GM12878 (cell line): ENCODE measurements at regions of chr15 and their contacts with region 1.

Region 1: GRCh38 chr15:79380755-79381497 is 51.2 kb upstream of the MINAR1 start:
- DNase-seq: peak; percentile 15
- ATAC-seq: peak; percentile 99
- H3K4me3 ChIP-seq: no peak overlapping the region
- H3K27ac ChIP-seq: no peak overlapping the region
- H3K4me1 ChIP-seq: no peaks in the 10 kb centered on the region
- H3K27me3 ChIP-seq: no peaks in the 10 kb centered on the region
- CTCF ChIP-seq: peak; percentile 82 to 89 (median 87)
- EP300 ChIP-seq: no peak
- POLR2A ChIP-seq: no peak
- RAD21 ChIP-seq: peak; percentile 88

Region 2: GRCh38 chr15:79209690-79210089 is 171.2 kb before region 1 on chr15:
- CTCF ChIA-PET with region 1: no interaction called
- POLR2A ChIA-PET with region 1: no interaction called
- RAD21 ChIA-PET with region 1: no interaction called
- SMC1A ChIA-PET with region 1: no interaction called
- in situ Hi-C with region 1: no loop called
- intact Hi-C with region 1: no loop called
- DNase-seq: no peak
- ATAC-seq: no peak
- H3K4me3 ChIP-seq: no peak overlapping the region
- H3K27ac ChIP-seq: no peak overlapping the region
- H3K4me1 ChIP-seq: no peaks in the 10 kb centered on the region
- H3K27me3 ChIP-seq: peaks cover 6 to 7% of the 10 kb centered on the region in 2 experiments
- CTCF ChIP-seq: no peak; a peak in 1 of 6 replicates
- EP300 ChIP-seq: no peak
- POLR2A ChIP-seq: no peak
- RAD21 ChIP-seq: no peak

Region 3: GRCh38 chr15:79339564-79340314 is 41.2 kb before region 1 on chr15:
- CTCF ChIA-PET with region 1: interaction called, 27 read pairs
- POLR2A ChIA-PET with region 1: no interaction called
- RAD21 ChIA-PET with region 1: interaction called, 10 read pairs
- SMC1A ChIA-PET with region 1: interaction called, 18 read pairs
- in situ Hi-C with region 1: no loop called
- intact Hi-C with region 1: no loop called
- DNase-seq: no peak
- ATAC-seq: peak; percentile 71
- H3K4me3 ChIP-seq: no peak overlapping the region
- H3K27ac ChIP-seq: no peak overlapping the region
- H3K4me1 ChIP-seq: no peaks in the 10 kb centered on the region
- H3K27me3 ChIP-seq: no peaks in the 10 kb centered on the region
- CTCF ChIP-seq: peak; percentile 78 to 91 (median 83)
- EP300 ChIP-seq: no peak
- POLR2A ChIP-seq: no peak
- RAD21 ChIP-seq: peak; percentile 71

Region 4: DNA sequence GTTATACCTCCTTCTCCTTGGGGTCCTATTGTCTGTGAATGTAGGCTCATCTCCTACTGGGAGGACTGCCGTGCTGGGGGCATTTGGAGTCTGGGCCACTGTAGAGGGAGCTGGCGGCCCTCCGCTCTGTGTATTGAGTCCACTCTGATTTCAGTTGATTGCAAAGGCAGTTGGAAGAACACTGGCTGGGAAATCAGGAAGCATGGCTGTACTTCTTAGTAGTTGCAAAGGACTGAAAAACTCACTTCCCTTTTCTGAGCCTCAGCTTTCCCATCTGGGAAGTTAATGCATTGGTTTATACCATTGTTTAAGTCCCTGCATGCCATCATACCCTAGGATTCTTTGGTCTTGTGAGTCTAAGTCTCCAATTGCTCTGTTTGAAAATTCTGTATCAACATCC is 23.4 kb before region 1 on chr15:
- CTCF ChIA-PET with region 1: interaction called, 17 read pairs
- POLR2A ChIA-PET with region 1: no interaction called
- RAD21 ChIA-PET with region 1: no interaction called
- SMC1A ChIA-PET with region 1: no interaction called
- in situ Hi-C with region 1: no loop called
- intact Hi-C with region 1: no loop called
- DNase-seq: no peak
- ATAC-seq: no peak
- H3K4me3 ChIP-seq: no peak overlapping the region
- H3K27ac ChIP-seq: no peak overlapping the region
- H3K4me1 ChIP-seq: peaks cover 4% of the 10 kb centered on the region; the same call in 1 of the 2 replicates
- H3K27me3 ChIP-seq: no peaks in the 10 kb centered on the region
- CTCF ChIP-seq: no peak
- EP300 ChIP-seq: no peak
- POLR2A ChIP-seq: no peak
- RAD21 ChIP-seq: no peak

Region 5: DNA sequence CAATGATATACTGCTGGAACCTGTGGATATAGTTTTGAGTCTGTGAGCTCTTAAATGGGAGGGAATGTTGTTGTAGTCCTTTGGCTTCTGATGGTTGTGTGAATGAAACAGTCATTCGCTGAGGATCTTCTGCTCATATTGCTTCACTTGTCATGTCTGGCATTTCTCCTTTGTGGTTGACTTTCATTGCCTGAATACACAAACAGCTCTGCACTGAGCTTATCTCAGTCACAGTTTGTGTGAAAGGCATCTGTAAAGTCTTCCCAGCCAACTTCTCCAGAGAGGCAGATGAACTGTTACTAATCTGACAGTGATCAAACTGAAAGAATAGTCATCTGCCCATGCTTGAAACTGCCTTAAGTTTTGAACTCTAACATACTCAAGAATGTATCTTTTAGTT is 10.2 kb before region 1 on chr15:
- CTCF ChIA-PET with region 1: interaction called, 18 read pairs
- POLR2A ChIA-PET with region 1: no interaction called
- RAD21 ChIA-PET with region 1: interaction called, 3 read pairs
- SMC1A ChIA-PET with region 1: interaction called, 10 read pairs
- in situ Hi-C with region 1: no loop called
- intact Hi-C with region 1: no loop called
- DNase-seq: no peak
- ATAC-seq: no peak
- H3K4me3 ChIP-seq: no peak overlapping the region
- H3K27ac ChIP-seq: no peak overlapping the region
- H3K4me1 ChIP-seq: no peaks in the 10 kb centered on the region
- H3K27me3 ChIP-seq: no peaks in the 10 kb centered on the region
- CTCF ChIP-seq: no peak
- EP300 ChIP-seq: no peak
- POLR2A ChIP-seq: no peak
- RAD21 ChIP-seq: no peak

Region 6: GRCh38 chr15:79399606-79400005 is 18.7 kb after region 1 on chr15:
- CTCF ChIA-PET with region 1: interaction called, 49 read pairs
- POLR2A ChIA-PET with region 1: no interaction called
- RAD21 ChIA-PET with region 1: no interaction called
- SMC1A ChIA-PET with region 1: no interaction called
- in situ Hi-C with region 1: no loop called
- intact Hi-C with region 1: no loop called
- DNase-seq: no peak
- ATAC-seq: no peak
- H3K4me3 ChIP-seq: no peak overlapping the region
- H3K27ac ChIP-seq: no peak overlapping the region
- H3K4me1 ChIP-seq: no peaks in the 10 kb centered on the region
- H3K27me3 ChIP-seq: no peaks in the 10 kb centered on the region
- CTCF ChIP-seq: no peak
- EP300 ChIP-seq: no peak
- POLR2A ChIP-seq: no peak
- RAD21 ChIP-seq: no peak

Region 7: DNA sequence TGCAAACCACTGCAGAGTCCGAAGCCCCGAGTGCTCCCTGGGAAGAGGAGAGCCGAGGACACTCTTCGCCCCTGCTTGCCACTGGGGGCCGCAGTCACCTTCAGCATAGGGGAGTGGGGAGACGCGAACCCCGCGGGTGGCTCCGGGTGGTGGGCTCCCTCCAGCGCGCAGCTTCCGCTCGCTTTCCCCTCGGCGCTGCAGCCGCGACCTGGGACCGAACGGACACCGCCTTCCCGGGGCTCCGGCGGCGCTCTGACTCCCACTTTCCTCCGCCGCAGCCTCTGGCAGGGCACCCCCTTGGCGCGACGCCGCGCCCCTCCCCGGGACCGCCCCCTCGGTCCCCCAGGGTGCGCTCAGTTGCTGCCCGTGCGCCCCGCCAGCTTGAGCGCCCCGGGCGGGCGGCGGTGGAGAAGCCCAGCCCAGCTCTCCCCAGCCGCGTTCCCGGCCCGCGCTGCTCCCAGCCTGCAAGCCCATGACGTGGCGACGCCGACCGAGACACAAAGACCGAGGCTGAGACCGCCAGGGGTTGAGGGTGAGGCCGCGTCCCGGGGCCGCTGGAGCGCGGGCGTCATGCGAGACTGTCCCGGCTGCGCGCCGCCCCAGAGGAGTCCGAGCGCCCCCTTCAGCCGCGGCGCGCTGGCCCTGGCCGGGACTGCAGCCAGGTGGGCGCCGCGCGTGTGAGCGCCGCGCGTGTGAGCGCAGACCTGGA is 50.9 kb after region 1 on chr15 and contains the start of gene MINAR1:
- CTCF ChIA-PET with region 1: no interaction called
- POLR2A ChIA-PET with region 1: no interaction called
- RAD21 ChIA-PET with region 1: no interaction called
- SMC1A ChIA-PET with region 1: no interaction called
- in situ Hi-C with region 1: no loop called
- intact Hi-C with region 1: no loop called
- DNase-seq: no peak
- ATAC-seq: peak; percentile 42
- H3K4me3 ChIP-seq: no peak within 1 kb of the TSS
- H3K27ac ChIP-seq: no peak within 1 kb of the TSS
- H3K4me1 ChIP-seq: no peaks in the 10 kb centered on the region
- H3K27me3 ChIP-seq: peaks cover 10 to 34% of the 10 kb centered on the region in 2 experiments
- CTCF ChIP-seq: no peak
- EP300 ChIP-seq: no peak
- POLR2A ChIP-seq: no peak
- RAD21 ChIP-seq: no peak
- polyA plus RNA-seq, gene MINAR1: 0.05 to 0.07 TPM

Region 8: DNA sequence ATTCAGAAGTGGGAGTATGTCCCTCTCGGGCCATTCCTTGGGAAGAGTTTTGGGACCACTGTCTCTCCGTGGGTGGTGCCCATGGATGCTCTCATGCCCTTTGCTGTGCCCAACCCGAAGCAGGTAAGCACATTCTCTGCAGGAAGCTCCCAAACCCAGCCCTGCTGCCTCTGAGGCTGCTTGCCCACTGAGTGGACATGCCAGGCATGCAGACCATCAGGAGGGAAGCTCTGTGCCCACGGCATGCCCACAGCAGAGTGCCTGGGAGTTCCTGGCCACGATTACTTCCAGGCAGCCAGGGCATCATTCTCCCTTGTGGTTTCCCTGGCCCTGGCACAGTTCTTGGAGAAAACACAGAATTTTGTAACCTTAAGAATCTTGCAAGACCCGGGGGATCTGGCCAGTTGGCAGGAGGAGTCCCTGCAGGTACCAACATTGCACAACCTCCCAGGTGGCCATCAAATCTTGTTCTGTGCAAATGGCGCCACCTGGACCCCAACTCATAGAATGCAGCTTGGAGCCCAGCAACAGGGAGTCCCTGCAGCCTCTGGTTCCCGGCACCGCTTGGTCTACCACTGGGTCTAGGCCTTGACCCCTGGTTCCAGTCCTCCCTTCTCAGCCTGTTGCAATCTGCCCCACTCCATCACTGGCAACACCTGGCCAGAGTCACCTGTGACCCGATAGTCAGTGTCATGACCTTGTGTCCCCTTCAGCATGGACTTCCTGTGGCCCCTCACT is 792.3 kb after region 1 on chr15:
- CTCF ChIA-PET with region 1: interaction called, 30 read pairs
- POLR2A ChIA-PET with region 1: no interaction called
- RAD21 ChIA-PET with region 1: interaction called, 18 read pairs
- SMC1A ChIA-PET with region 1: interaction called, 13 read pairs
- in situ Hi-C with region 1: loop called (anchors 10 kb)
- intact Hi-C with region 1: loop called (anchors 2 kb)
- DNase-seq: no peak
- ATAC-seq: peak; percentile 99
- H3K4me3 ChIP-seq: no peak overlapping the region
- H3K27ac ChIP-seq: no peak overlapping the region
- H3K4me1 ChIP-seq: no peaks in the 10 kb centered on the region; the same call in 1 of the 2 replicates
- H3K27me3 ChIP-seq: no peaks in the 10 kb centered on the region
- CTCF ChIP-seq: peak; percentile 80 to 84 (median 81)
- EP300 ChIP-seq: no peak
- POLR2A ChIP-seq: no peak
- RAD21 ChIP-seq: peak; percentile 96